GM12878 (cell line): ENCODE measurements at regions of chr5 and their contacts with region 1.

Region 1: DNA sequence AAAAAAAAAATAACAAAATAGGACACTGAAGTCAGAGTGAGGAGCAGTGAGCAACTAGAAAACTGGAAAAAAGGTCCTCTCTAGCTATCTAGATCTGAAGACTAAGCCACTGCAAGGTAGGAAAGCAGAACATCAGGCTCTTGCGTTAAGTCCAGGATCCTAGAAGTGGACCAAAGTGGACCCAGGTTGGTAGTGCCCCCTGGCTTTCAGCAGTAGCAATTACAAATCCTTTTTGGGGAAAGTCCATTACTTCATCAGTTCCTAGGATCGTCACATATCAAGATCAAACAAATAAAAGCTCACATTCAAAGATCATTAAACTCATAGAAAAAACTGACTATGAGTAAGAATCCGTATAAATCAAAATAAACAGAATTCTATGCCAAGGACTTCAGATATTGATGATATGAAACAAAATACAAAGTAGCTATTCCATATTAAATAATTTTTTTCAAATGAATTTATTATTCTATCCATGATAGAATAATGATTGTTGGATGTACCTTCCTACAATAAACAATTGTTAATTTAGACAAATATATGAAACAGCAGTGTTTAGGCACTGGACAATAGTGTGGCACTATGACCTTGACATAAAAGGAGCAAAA is 6.5 kb upstream of the RICTOR start:
- DNase-seq: no peak
- ATAC-seq: peak; percentile 60
- H3K4me3 ChIP-seq: no peak overlapping the region
- H3K27ac ChIP-seq: no peak overlapping the region
- H3K4me1 ChIP-seq: peaks cover 4% of the 10 kb centered on the region; the same call in 1 of the 2 replicates
- H3K27me3 ChIP-seq: no peaks in the 10 kb centered on the region
- CTCF ChIP-seq: peak; percentile 79 to 80 (median 80)
- EP300 ChIP-seq: no peak
- POLR2A ChIP-seq: no peak
- RAD21 ChIP-seq: peak; percentile 74

Region 2: GRCh38 chr5:38441453-38442246 is 639.1 kb before region 1 on chr5:
- CTCF ChIA-PET with region 1: interaction called, 12 read pairs
- POLR2A ChIA-PET with region 1: no interaction called
- RAD21 ChIA-PET with region 1: interaction called, 16 read pairs
- SMC1A ChIA-PET with region 1: interaction called, 12 read pairs
- in situ Hi-C with region 1: loop called (anchors 25 kb)
- intact Hi-C with region 1: no loop called
- DNase-seq: peak; percentile 33
- ATAC-seq: peak; percentile 100
- H3K4me3 ChIP-seq: no peak overlapping the region
- H3K27ac ChIP-seq: no peak overlapping the region
- H3K4me1 ChIP-seq: no peaks in the 10 kb centered on the region
- H3K27me3 ChIP-seq: peaks cover 0 to 2% of the 10 kb centered on the region in 2 experiments; a peak in 3 of 4 replicates
- CTCF ChIP-seq: peak; percentile 90 to 96 (median 92); a peak in 5 of 6 replicates
- EP300 ChIP-seq: no peak
- POLR2A ChIP-seq: no peak
- RAD21 ChIP-seq: peak; percentile 99

Region 3: GRCh38 chr5:38931731-38932130 is 149.0 kb before region 1 on chr5:
- CTCF ChIA-PET with region 1: interaction called, 19 read pairs
- POLR2A ChIA-PET with region 1: interaction called, 3 read pairs
- RAD21 ChIA-PET with region 1: interaction called, 3 read pairs
- SMC1A ChIA-PET with region 1: no interaction called
- in situ Hi-C with region 1: no loop called
- intact Hi-C with region 1: no loop called
- DNase-seq: no peak
- ATAC-seq: no peak
- H3K4me3 ChIP-seq: no peak overlapping the region
- H3K27ac ChIP-seq: no peak overlapping the region
- H3K4me1 ChIP-seq: no peaks in the 10 kb centered on the region
- H3K27me3 ChIP-seq: no peaks in the 10 kb centered on the region
- CTCF ChIP-seq: no peak
- EP300 ChIP-seq: no peak
- POLR2A ChIP-seq: no peak
- RAD21 ChIP-seq: no peak

Region 4: DNA sequence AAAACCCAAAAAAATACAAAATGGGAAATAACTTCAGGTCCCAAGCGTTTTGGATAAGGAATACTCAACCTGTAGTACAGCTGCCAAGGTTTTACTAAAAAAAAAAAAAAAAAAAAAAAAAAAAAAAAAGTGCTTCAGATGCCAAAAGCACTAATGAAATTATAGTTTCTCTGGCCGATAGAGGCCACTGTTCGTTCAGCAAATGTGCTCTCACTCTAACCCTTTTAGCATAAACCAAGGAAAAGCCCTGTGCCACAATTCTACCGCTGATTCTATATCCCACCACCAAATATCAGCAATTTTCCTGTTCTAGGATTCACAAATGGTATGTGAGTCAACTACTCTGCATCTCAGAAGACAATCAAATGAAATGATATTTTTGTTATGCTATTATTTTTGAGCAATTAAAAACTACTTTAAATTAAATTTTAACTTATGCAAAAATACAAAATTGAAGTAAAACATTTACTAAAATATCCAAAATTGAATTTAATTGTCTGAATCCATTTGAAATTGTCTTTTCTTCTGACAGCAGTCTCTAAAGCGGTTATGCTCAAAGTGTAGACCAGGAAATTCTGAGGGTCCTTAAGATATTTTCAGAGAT is 86.3 kb before region 1 on chr5:
- CTCF ChIA-PET with region 1: interaction called, 62 read pairs
- POLR2A ChIA-PET with region 1: no interaction called
- RAD21 ChIA-PET with region 1: interaction called, 10 read pairs
- SMC1A ChIA-PET with region 1: interaction called, 35 read pairs
- in situ Hi-C with region 1: no loop called
- intact Hi-C with region 1: loop called (anchors 1 kb)
- DNase-seq: no peak
- ATAC-seq: peak; percentile 91
- H3K4me3 ChIP-seq: no peak overlapping the region
- H3K27ac ChIP-seq: no peak overlapping the region
- H3K4me1 ChIP-seq: no peaks in the 10 kb centered on the region
- H3K27me3 ChIP-seq: no peaks in the 10 kb centered on the region
- CTCF ChIP-seq: peak; percentile 29 to 51 (median 49); a peak in 4 of 6 replicates
- EP300 ChIP-seq: no peak
- POLR2A ChIP-seq: no peak
- RAD21 ChIP-seq: peak; percentile 80

Region 5: DNA sequence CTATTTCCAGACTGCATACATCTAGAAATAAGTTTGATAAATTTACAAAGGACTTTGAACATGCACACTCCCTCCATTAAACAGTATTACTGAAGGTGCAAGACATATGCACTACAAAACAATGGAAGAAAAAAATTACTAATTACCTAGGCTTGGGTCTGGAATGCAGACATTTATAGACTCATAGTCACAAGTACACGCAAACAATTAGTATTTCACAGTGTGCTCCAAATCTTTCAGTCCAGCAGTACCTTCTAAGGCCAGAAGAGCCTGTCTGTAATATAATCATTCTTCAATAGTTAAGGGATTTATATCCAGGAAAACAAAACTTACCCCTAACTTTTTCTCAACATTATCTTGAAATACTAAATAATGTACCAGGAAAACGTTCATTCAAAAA is 17.7 kb before region 1 on chr5:
- CTCF ChIA-PET with region 1: interaction called, 7 read pairs
- POLR2A ChIA-PET with region 1: no interaction called
- RAD21 ChIA-PET with region 1: interaction called, 3 read pairs
- SMC1A ChIA-PET with region 1: interaction called, 17 read pairs
- in situ Hi-C with region 1: no loop called
- intact Hi-C with region 1: no loop called
- DNase-seq: no peak
- ATAC-seq: peak; percentile 31; the same call in 2 of the 3 replicates
- H3K4me3 ChIP-seq: no peak overlapping the region
- H3K27ac ChIP-seq: no peak overlapping the region
- H3K4me1 ChIP-seq: peaks cover 8% of the 10 kb centered on the region; the same call in 1 of the 2 replicates
- H3K27me3 ChIP-seq: no peaks in the 10 kb centered on the region
- CTCF ChIP-seq: no peak
- EP300 ChIP-seq: no peak
- POLR2A ChIP-seq: no peak
- RAD21 ChIP-seq: no peak

Region 6: GRCh38 chr5:39106322-39106721 is 25.6 kb after region 1 on chr5:
- CTCF ChIA-PET with region 1: interaction called, 9 read pairs
- POLR2A ChIA-PET with region 1: no interaction called
- RAD21 ChIA-PET with region 1: interaction called, 3 read pairs
- SMC1A ChIA-PET with region 1: interaction called, 12 read pairs
- in situ Hi-C with region 1: no loop called
- intact Hi-C with region 1: no loop called
- DNase-seq: no peak
- ATAC-seq: no peak
- H3K4me3 ChIP-seq: no peak overlapping the region
- H3K27ac ChIP-seq: no peak overlapping the region
- H3K4me1 ChIP-seq: no peaks in the 10 kb centered on the region
- H3K27me3 ChIP-seq: no peaks in the 10 kb centered on the region
- CTCF ChIP-seq: 0 out of 6 replicates have a peak, but pooled peaks of 1 of the 3 experiments have one; percentile 14
- EP300 ChIP-seq: no peak
- POLR2A ChIP-seq: no peak
- RAD21 ChIP-seq: no peak

Region 7: DNA sequence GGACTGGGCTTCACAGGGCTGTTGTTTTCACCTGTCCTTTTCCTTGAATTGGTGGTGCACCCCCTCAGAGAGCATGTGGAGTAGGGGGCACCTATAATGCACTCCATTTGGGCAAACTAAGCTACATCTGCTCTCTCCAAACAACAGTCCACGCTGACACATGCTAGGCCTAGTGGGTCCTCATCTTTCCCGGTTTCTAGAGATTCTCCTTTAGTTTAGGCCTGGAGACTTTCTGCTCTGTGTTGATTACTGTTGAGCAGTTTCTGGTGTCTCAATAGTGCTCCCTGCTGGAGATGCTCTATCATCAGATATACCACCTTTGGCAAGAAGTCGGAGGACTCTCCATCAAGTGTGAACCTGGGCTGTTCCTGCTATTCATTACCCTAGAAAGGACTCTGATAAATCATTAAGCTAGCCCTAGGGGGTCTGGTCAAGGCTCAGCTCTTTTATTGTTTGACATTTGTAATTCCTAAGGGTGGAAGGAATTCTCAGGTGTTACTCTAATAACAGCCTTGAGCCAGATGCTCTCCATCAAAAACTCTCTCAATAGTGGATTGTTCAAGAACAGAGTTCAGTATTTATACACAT is 202.6 kb after region 1 on chr5:
- CTCF ChIA-PET with region 1: no interaction called
- POLR2A ChIA-PET with region 1: no interaction called
- RAD21 ChIA-PET with region 1: interaction called, 5 read pairs
- SMC1A ChIA-PET with region 1: interaction called, 3 read pairs
- in situ Hi-C with region 1: no loop called
- intact Hi-C with region 1: loop called (anchors 10 kb)
- DNase-seq: no peak
- ATAC-seq: peak; percentile 98
- H3K4me3 ChIP-seq: no peak overlapping the region
- H3K27ac ChIP-seq: no peak overlapping the region
- H3K4me1 ChIP-seq: no peaks in the 10 kb centered on the region
- H3K27me3 ChIP-seq: no peaks in the 10 kb centered on the region
- CTCF ChIP-seq: peak; percentile 57 to 79 (median 58); a peak in 5 of 6 replicates
- EP300 ChIP-seq: no peak
- POLR2A ChIP-seq: no peak
- RAD21 ChIP-seq: peak; percentile 91